ENCODE measurements at regions of chr1 and their contacts with region 1.

Region 1: DNA sequence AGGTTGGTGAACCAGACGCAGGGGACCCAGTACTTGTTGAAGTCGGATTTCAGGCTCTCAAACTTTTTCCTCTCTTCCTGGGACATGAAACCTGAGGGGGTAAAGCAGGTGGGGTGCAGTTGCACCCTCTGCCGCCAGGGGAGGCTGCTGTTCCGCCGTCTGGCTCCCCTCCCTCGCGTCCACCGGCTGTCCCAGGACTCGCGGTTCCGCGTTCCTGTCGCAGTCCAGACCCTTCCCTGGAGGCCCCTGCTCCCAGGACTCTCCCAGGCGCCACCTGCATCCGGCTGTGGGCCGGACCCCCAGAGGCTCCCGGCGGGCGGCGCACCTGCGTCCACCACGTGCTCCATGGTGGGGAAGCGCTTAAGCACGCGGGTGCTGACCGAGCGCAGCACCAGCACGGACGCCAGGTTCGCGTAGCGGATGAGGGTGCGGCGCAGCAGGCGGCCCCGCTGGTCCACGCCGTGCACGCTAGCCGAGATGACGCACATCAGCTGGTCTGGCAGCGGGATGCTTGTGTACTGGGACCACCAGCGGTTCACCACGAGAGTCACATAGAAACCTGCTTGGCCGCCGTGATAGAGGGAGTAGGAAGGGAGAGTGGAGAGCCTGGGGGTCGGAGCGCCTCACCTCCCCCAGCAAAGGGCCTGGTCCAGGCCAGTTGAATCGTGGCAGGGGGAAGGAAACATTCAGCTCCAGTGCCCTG is 1.7 kb downstream of the BEST4 start:
- DNase-seq: peak; percentile 79
- H3K4me3 Mint-ChIP-seq: peak overlapping the region; percentile 72
- H3K27ac Mint-ChIP-seq: peak overlapping the region; percentile 71
- H3K4me1 Mint-ChIP-seq: peaks cover 25% of the 10 kb centered on the region
- H3K27me3 Mint-ChIP-seq: no peaks in the 10 kb centered on the region

Region 2: DNA sequence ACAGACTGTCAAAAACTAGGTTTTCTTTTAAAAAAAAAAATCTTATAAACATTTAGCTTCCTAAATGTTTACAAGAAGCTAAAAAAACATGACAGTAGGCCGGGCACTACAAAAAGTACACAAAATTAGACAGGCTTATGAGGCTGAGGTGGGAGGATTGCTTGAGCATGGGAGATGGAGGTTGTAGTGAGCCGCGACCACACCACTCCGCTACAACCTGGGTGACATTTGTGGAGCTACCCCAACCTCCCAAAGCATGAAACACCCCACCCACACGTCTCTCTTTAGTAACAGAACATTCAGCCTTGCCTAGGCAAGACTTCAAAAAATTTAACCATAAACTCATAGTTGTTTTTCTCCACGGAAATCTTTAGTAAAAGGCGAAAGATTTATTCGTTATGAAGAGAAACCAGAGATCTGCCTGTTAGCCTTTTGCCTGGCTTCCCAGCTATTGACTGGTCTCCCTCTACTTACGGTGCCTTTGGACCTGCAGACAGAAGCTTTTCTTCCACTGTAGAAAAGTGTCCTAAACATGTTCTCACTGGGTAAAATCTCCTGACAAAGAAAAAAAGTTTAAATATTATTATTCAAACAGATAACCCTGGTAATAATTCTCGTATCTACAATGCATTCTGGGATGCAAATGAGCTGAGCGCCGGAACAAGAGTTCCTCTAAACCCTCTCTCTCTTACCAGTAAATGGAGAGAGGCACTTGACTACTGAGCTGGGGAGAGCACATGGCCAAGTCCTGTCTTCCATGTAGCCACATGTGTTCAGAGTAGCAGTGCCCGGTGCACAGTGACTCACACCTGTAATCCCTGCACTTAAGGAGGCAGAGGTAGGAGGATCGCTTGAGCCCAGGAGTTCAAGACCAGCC is 64.6 kb before region 1 on chr1:
- CTCF ChIA-PET with region 1: interaction called, 5 read pairs
- intact Hi-C with region 1: loop called (anchors 2 kb)
- DNase-seq: peak; percentile 90
- H3K4me3 Mint-ChIP-seq: peak overlapping the region; percentile 66
- H3K27ac Mint-ChIP-seq: peak overlapping the region; percentile 98
- H3K4me1 Mint-ChIP-seq: peaks cover 83% of the 10 kb centered on the region
- H3K27me3 Mint-ChIP-seq: no peaks in the 10 kb centered on the region

Region 3: GRCh38 chr1:44775078-44775929 is 11.0 kb before region 1 on chr1 and contains the start of gene RPS8:
- CTCF ChIA-PET with region 1: interaction called, 28 read pairs
- intact Hi-C with region 1: loop called (anchors 1 kb)
- DNase-seq: peak; percentile 94
- H3K4me3 Mint-ChIP-seq: peak within 1 kb of the TSS; percentile 95
- H3K27ac Mint-ChIP-seq: peak within 1 kb of the TSS; percentile 92
- H3K4me1 Mint-ChIP-seq: peaks cover 32% of the 10 kb centered on the region
- H3K27me3 Mint-ChIP-seq: no peaks in the 10 kb centered on the region
- total RNA-seq, gene RPS8: 3,619 to 3,772 TPM

Region 4: GRCh38 chr1:44799770-44800584 is 13.7 kb after region 1 on chr1 and contains the start of gene PLK3:
- CTCF ChIA-PET with region 1: interaction called, 10 read pairs
- intact Hi-C with region 1: loop called (anchors 2 kb)
- DNase-seq: peak; percentile 99
- H3K4me3 Mint-ChIP-seq: peak within 1 kb of the TSS; percentile 81
- H3K27ac Mint-ChIP-seq: peak within 1 kb of the TSS; percentile 100
- H3K4me1 Mint-ChIP-seq: peaks cover 36% of the 10 kb centered on the region
- H3K27me3 Mint-ChIP-seq: no peaks in the 10 kb centered on the region
- total RNA-seq, gene PLK3: 44.2 to 46.7 TPM

Region 5: DNA sequence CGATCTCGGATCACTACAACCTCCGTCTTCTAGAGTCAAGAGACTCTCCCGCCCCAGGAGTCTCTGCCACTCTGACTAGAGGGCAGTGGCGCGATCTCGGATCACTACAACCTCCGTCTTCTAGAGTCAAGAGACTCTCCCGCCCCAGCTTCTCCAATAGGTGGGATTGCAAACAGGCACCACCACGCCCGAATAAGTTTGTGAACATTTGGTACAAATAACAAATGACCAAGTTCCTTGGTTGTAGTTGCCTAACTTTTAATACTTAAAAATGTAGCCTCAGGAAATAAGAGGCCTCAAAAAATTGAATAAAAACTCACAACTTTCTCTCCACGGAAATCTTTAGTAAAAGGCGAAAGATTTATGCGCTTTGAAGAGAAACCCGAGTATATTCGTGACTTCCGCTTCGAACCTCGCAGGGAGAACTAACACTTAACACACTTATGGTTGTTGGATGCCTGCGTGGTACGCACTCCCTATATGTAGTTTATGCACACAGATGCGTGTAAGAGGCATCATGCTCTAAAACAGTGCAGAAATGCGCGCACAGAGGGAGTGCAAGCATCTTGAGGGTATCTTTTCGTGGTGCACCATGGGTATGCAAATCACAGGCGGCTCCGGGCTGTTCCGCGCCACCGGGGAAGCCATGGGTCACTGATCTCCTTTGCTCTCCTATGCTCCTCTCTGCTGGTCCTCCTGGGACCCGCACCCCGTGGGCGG is 33.5 kb after region 1 on chr1:
- CTCF ChIA-PET with region 1: interaction called, 9 read pairs
- intact Hi-C with region 1: loop called (anchors 1 kb)
- DNase-seq: peak; percentile 86
- H3K4me3 Mint-ChIP-seq: peak overlapping the region; percentile 88
- H3K27ac Mint-ChIP-seq: peak overlapping the region; percentile 99
- H3K4me1 Mint-ChIP-seq: peaks cover 34% of the 10 kb centered on the region
- H3K27me3 Mint-ChIP-seq: no peaks in the 10 kb centered on the region

Region 6: DNA sequence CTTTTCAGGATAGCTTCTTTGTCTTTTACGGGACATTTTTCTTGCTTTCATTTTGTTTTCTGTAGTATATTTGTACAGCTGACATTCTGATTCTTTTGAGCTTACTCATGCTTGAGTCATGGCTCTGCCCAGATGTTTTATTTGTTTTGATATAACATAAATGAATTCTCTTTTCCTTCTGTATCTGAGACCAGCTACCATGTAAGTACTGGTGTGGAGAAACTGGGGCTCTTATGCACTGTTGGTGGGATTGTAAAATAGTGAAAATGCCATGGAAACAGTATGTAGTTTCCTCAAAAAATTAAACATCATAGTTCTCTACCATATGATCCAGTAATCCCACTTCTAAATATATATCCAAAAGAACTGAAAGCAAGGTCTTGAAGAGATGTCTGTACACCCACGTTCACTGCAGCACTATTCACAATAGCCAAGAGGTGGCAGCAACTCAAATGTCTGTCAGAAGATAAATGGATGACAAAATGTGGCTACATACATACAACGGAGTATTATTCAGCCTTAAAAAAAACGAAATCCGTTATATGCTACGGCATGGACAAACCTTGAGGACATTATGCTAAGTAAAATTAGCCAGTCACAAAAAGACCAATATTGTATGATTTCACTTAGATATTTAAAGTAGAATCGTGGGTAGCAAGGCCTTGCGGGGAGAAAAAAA is 138.7 kb after region 1 on chr1:
- CTCF ChIA-PET with region 1: no interaction called
- intact Hi-C with region 1: no loop called
- DNase-seq: peak; percentile 35
- H3K4me3 Mint-ChIP-seq: no peak overlapping the region
- H3K27ac Mint-ChIP-seq: no peak overlapping the region
- H3K4me1 Mint-ChIP-seq: no peaks in the 10 kb centered on the region
- H3K27me3 Mint-ChIP-seq: no peaks in the 10 kb centered on the region

Region 7: GRCh38 chr1:44985747-44986359 is 199.6 kb after region 1 on chr1:
- CTCF ChIA-PET with region 1: no interaction called
- intact Hi-C with region 1: loop called (anchors 5 kb)
- DNase-seq: no peak
- H3K4me3 Mint-ChIP-seq: peak overlapping the region; percentile 100
- H3K27ac Mint-ChIP-seq: peak overlapping the region; percentile 80
- H3K4me1 Mint-ChIP-seq: peaks cover 23% of the 10 kb centered on the region
- H3K27me3 Mint-ChIP-seq: no peaks in the 10 kb centered on the region

Measured in activated naive CD4-positive, alpha-beta T cell treated with anti-CD3 and anti-CD28 coated beads for 36 hours (primary cell).